ENCODE measurements at regions of chr13 and their contacts with region 1.

Region 1: DNA sequence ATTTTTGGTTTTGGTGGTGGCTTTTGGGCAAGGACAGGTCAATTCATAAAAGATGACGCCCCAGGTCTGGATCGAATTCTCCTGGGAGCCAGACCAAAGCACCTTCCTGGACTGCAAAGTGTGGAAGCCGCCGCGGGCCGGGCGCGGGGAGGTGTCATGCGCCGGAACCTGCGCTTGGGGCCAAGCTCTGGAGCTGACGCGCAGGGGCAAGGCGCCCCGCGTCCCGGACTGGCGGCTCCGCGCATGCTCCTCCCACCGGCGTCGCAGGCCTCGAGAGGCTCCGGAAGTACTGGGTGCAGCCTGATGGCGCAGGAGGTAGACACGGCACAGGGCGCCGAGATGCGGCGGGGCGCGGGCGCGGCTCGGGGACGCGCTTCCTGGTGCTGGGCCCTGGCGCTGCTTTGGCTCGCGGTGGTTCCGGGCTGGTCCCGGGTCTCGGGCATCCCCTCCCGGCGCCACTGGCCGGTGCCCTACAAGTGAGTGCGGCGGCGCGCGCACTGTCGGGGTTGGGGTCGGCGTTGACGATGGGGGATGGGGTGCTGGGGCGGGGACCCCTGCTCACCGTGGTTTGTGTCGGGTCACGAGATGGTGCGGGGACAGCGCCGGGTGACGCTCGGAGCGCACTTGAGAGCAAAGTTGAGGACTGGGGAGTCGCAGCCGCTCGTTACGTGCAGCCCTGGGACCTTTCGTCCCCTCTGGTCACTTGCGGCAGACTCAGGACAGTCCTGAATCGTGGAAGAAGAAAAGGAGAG is at the start of gene CLN5:
- DNase-seq: peak; percentile 98
- H3K4me3 ChIP-seq: peak within 1 kb of the TSS; percentile 52 to 80 (median 77)
- H3K27ac ChIP-seq: peak within 1 kb of the TSS; percentile 79 to 93 (median 91)
- H3K4me1 ChIP-seq: peaks cover 0 to 27% (median 12%) of the 10 kb centered on the region in 4 donors
- H3K27me3 ChIP-seq: no peaks in the 10 kb centered on the region
- CTCF ChIP-seq: peak in 1 of 4 experiments; percentile 26
- EP300 ChIP-seq: peak in 1 of 4 donors; percentile 25
- POLR2A ChIP-seq: peak; percentile 83 to 86
- total RNA-seq, gene CLN5: 14.0 to 29.3 (median 27.0) TPM

Region 2: GRCh38 chr13:75812751-75813181 is 1179.2 kb before region 1 on chr13:
- intact Hi-C with region 1: no loop called
- DNase-seq: no peak
- H3K4me3 ChIP-seq: no peak overlapping the region
- H3K27ac ChIP-seq: no peak overlapping the region
- H3K4me1 ChIP-seq: no peaks in the 10 kb centered on the region
- H3K27me3 ChIP-seq: no peaks in the 10 kb centered on the region
- CTCF ChIP-seq: no peak
- EP300 ChIP-seq: no peak
- POLR2A ChIP-seq: no peak

Region 3: DNA sequence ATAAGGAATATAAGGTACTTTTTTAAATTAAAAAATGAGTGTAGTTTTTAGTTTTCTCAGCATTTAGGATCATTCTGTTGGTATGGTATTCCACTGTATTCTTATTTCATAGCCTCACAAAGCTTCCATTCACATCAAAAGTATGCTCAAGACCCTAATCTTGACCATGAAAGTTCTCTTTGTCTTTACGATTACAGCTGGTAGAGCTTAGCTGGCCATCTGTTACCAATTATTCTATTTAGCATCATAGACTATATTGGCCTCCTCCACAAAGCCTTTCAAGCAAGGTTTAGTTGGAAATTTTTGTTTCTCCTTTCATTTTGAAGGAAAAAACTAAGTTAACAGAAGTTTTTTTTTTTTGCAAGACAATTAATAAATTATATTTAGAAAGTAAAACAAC is 350.9 kb before region 1 on chr13:
- intact Hi-C with region 1: loop called (anchors 10 kb)
- DNase-seq: no peak
- H3K4me3 ChIP-seq: no peak overlapping the region
- H3K27ac ChIP-seq: peak overlapping the region in 2 of 4 donors; percentile 67 to 75
- H3K4me1 ChIP-seq: peaks cover 0 to 43% (median 30%) of the 10 kb centered on the region in 4 donors
- H3K27me3 ChIP-seq: no peaks in the 10 kb centered on the region
- CTCF ChIP-seq: no peak
- EP300 ChIP-seq: no peak
- POLR2A ChIP-seq: no peak

Region 4: DNA sequence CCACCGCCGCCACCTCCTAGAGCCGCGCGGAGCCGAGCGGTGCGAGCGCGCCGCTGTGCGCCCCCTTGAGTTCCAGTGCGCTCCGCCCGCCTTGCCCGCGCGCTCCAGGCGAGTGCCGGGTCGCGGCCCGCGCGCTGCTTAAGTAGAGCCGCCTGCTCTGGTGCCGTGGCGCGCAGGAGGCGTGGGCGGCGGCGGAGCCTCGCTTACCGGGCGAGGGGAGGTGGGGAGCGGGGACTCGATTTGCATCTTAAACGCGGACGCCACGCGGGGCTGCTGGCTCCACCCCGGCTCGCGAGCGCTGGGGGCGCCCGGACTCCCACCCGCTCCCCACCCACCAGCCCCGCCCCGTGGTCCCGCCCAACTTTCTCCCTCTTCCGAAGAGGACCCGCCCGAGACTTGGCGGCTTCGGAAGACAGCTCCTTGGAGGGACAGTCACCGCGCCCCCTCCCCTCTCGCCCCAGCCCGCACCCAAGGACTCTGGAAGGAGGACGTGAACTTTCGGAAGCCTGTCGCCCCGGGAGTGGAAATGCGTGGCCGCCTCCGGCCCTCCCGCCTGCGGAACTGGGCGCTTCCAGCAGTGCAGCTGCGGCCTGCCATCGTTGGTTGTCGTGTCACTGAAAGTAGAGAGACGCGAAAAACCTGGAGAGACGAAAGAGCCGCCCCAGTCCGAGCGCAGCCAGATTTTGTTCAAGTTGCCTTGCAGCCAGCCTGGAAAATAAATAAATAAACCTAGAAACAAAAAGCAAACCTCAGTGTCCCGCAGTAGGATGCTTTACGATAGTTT is 105.5 kb before region 1 on chr13 and contains the start of gene KCTD12:
- intact Hi-C with region 1: loop called (anchors 2 kb)
- DNase-seq: peak; percentile 96
- H3K4me3 ChIP-seq: peak within 1 kb of the TSS; percentile 61 to 75 (median 71)
- H3K27ac ChIP-seq: peak within 1 kb of the TSS; percentile 89 to 90 (median 90)
- H3K4me1 ChIP-seq: peaks cover 0 to 34% (median 16%) of the 10 kb centered on the region in 4 donors
- H3K27me3 ChIP-seq: no peaks in the 10 kb centered on the region
- CTCF ChIP-seq: peak in 1 of 4 experiments; percentile 35
- EP300 ChIP-seq: no peak
- POLR2A ChIP-seq: peak in 1 of 2 donors; percentile 45
- total RNA-seq, gene KCTD12: 77.3 to 129 (median 97.5) TPM

Region 5: DNA sequence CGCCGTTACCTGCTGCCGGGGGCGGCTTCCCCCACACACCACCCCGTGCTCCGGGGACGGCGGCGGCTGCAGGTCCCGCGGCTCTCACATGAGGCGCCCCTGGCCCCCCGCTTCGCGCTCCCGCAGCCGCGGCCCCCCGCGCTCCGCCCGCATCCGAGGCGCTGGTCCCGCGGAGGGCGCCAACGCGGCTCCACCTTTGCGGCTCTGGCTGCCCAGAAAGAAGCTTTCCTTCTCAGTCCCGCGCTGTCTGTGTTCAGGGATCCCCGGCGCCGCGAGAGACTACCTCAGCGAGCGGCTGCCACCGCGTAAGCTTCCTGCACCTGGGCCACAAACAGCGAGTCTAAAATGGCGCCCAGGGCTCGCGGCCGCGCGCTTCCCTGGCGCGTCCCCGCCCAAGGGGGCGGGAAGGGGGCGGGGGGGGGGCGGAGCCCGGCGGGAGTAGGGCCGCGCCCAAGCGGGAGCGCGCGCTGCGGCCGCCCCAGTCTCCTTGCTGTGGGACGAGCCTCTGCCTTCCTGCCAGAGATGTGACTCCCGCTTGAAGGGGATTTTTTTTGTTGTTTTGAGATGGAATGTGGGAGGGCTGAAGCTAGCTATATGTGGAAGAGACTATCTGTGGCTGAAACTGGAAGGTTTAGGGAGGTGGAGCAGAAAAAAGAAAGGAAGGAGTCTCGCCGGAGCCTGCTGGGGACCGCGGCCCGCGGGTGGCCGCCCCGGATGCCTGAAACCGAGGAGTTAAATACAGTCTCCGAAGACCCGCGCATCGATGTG is 35.0 kb after region 1 on chr13 and contains the start of gene FBXL3:
- intact Hi-C with region 1: loop called (anchors 2 kb)
- DNase-seq: peak; percentile 90
- H3K4me3 ChIP-seq: peak within 1 kb of the TSS; percentile 51 to 99 (median 96)
- H3K27ac ChIP-seq: peak within 1 kb of the TSS; percentile 99 to 100 (median 99)
- H3K4me1 ChIP-seq: peaks cover 0 to 47% (median 42%) of the 10 kb centered on the region in 4 donors
- H3K27me3 ChIP-seq: no peaks in the 10 kb centered on the region
- CTCF ChIP-seq: no peak
- EP300 ChIP-seq: no peak
- POLR2A ChIP-seq: peak; percentile 18 to 40
- total RNA-seq, gene FBXL3: 60.0 to 96.0 (median 86.0) TPM

Region 6: DNA sequence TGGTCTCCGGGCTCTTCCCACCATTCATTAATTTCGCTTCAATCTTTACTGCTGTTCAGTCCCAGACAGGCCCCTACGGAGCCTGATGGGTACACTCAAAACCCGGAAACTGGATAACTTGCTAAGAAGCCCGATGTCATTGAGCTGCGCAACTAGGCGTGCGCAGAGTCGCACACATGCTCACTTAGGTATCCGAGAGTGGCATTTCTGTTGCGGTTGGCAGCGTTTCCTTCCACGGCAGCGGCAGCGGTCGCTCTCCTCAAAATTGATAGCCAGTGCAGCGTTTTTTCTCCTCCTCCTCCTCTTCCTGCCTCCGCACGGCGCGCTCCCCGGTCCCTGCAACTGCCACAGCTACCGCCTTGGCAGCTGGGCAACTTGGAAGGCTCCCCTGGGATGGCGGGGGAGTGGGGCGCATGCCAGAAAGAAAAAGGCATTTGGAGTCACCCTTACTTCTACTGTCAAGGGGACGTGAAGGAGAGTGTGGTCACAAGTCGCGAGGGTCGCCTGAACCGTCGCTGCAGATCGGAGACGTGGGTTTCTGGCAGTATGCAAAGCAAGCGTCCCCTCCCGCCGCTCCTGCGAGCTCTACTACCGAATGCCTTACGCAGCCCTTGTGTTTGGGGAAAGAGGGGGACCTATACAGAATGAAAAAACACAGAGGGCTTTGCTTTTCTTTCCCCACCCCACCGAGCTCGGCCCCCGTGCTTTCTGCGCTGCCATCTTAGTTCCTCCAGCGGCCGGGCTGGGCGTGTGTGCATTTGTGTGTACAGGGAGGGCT is 337.4 kb after region 1 on chr13:
- intact Hi-C with region 1: loop called (anchors 10 kb)
- DNase-seq: peak; percentile 88
- H3K4me3 ChIP-seq: peak overlapping the region; percentile 66 to 87 (median 85)
- H3K27ac ChIP-seq: peak overlapping the region; percentile 83 to 93 (median 88)
- H3K4me1 ChIP-seq: peaks cover 3 to 37% (median 29%) of the 10 kb centered on the region in 4 donors
- H3K27me3 ChIP-seq: no peaks in the 10 kb centered on the region
- CTCF ChIP-seq: no peak
- EP300 ChIP-seq: no peak
- POLR2A ChIP-seq: peak in 1 of 2 donors; percentile 38

Region 7: DNA sequence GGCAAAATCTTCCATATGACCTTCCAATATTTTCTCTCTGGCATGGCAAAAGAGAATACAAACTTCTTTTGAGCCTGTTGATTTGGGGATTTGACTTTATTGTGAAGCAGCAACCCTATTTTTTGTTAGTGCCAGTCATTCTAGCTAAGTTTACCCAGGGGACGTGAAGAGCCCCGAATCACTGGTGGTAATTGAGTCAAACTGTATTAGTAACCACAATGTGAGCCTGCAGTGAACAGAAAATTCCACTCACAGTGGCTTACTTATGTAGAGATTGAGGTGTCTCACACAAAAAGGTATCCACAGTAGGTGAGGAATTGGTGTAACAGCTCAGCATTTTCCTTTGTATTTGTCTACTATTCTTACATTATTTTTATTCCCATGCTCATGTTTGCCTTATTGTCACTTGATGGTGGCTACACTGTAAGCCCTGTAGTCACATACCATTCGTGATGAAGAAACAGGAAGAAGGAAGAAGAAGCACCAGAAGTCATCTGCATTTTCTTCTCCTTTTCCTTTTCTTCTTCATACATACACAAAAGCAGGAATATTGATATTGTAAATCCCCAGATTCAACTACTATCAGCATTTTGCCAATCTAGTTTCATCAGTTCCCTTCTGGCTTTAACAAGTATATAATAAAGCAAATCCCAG is 368.2 kb after region 1 on chr13:
- intact Hi-C with region 1: no loop called
- DNase-seq: no peak
- H3K4me3 ChIP-seq: no peak overlapping the region
- H3K27ac ChIP-seq: no peak overlapping the region
- H3K4me1 ChIP-seq: no peaks in the 10 kb centered on the region
- H3K27me3 ChIP-seq: no peaks in the 10 kb centered on the region
- CTCF ChIP-seq: no peak
- EP300 ChIP-seq: no peak
- POLR2A ChIP-seq: no peak

Measured in sigmoid colon (tissue), 7 donors.